Dendritic cell treated with granulocyte-macrophage colony-stimulating factor and Interleukin-4, amounts not matched to agents 40 ng/mL and 50 ng/mL, for 4 days (primary cell): ENCODE measurements at regions of chr19 and their contacts with region 1.

Region 1: GRCh38 chr19:1605236-1606137 is at the start of gene UQCR11:
- H3K4me3 Mint-ChIP-seq: peak within 1 kb of the TSS; percentile 97
- H3K27ac Mint-ChIP-seq: peak within 1 kb of the TSS; percentile 98
- H3K4me1 Mint-ChIP-seq: peaks cover 77% of the 10 kb centered on the region
- H3K27me3 Mint-ChIP-seq: peaks cover 12% of the 10 kb centered on the region

Region 2: GRCh38 chr19:1507763-1508509 is 97.6 kb before region 1 on chr19:
- intact Hi-C with region 1: no loop called
- H3K4me3 Mint-ChIP-seq: peak overlapping the region; percentile 80
- H3K27ac Mint-ChIP-seq: peak overlapping the region; percentile 85
- H3K4me1 Mint-ChIP-seq: peaks cover 24% of the 10 kb centered on the region
- H3K27me3 Mint-ChIP-seq: peaks cover 82% of the 10 kb centered on the region

Region 3: DNA sequence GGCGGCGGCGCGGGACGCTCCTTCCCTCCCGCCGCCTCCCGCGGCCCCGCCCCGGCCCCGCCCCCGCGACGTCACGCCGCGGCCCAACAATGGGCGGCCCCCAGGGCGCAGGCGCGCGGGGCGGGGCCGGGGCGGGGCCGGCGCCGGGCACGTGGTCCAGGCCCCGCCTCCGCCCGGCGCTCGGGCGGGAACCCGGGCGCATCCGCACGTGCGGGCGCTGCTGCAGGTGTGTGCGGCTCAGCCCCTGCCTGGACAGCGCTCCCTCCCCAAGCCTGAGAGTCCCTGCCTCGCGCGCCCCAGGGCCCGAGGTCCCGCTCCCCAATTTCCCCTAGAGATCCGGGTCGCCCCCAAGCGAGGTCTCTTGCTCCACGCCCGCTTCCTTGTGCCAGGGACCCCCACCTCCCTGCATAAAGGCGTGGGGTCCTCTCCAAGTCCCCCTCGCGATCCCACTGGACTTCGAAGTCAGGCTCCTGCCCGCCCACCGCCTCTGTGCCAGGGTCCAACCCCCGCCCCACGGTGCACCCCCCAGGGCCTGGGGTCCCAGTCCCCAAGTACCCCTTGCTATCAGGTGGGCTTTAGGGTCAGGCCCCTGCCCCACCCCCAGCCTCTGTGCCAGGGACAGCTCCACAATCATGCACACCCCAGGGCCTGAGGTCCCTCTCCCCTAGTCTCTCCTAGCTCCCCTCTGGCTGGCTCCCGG is 37.0 kb before region 1 on chr19 and contains the start of gene MEX3D:
- intact Hi-C with region 1: no loop called
- H3K4me3 Mint-ChIP-seq: peak within 1 kb of the TSS; percentile 65
- H3K27ac Mint-ChIP-seq: peak within 1 kb of the TSS; percentile 44
- H3K4me1 Mint-ChIP-seq: peaks cover 15% of the 10 kb centered on the region
- H3K27me3 Mint-ChIP-seq: peaks cover 53% of the 10 kb centered on the region

Region 4: DNA sequence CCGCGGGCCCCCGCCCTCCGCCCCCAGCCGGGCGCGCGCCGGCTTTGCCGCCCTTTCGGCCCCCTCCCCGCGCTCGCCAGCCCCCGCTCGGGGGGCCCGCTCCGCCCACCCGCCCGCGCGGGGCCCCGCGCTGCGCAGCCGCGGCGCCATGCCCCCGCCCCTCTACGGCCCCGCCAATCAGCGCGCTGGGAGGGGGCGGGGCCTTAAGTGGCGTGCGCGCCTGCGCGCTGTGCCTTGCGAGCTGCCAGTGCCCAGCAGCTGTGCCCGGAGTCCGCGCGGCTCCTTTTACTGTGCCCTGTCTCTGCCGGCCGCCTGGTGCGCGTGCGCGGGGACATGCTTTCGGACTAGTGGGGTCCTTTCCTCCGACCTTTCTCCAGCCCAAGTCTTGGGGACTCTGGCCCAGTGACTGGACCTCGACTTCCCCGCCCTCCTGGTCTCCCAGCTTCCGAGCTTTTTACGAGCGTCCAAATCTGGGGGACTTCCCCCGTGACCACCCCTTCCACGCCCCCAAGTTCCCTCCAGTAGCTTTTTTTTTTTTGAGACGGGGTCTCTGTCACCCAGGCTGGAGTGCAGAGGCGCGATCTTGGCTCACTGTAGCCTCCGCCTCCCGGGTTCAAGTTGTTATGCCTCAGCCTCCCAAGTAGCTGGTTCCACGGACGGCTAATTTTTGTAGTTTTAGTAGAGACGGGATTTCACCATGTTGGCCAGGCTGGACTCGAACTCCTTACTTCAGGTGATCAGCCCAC is 12.6 kb before region 1 on chr19 and contains the start of gene MBD3:
- intact Hi-C with region 1: loop called (anchors 1 kb)
- H3K4me3 Mint-ChIP-seq: peak within 1 kb of the TSS; percentile 91
- H3K27ac Mint-ChIP-seq: peak within 1 kb of the TSS; percentile 95
- H3K4me1 Mint-ChIP-seq: peaks cover 31% of the 10 kb centered on the region
- H3K27me3 Mint-ChIP-seq: no peaks in the 10 kb centered on the region

Region 5: GRCh38 chr19:1652471-1653299 is 47.2 kb after region 1 on chr19 and contains the start of gene TCF3:
- intact Hi-C with region 1: loop called (anchors 1 kb)
- H3K4me3 Mint-ChIP-seq: peak within 1 kb of the TSS; percentile 82
- H3K27ac Mint-ChIP-seq: peak within 1 kb of the TSS; percentile 97
- H3K4me1 Mint-ChIP-seq: peaks cover 52% of the 10 kb centered on the region
- H3K27me3 Mint-ChIP-seq: peaks cover 2% of the 10 kb centered on the region

Region 6: DNA sequence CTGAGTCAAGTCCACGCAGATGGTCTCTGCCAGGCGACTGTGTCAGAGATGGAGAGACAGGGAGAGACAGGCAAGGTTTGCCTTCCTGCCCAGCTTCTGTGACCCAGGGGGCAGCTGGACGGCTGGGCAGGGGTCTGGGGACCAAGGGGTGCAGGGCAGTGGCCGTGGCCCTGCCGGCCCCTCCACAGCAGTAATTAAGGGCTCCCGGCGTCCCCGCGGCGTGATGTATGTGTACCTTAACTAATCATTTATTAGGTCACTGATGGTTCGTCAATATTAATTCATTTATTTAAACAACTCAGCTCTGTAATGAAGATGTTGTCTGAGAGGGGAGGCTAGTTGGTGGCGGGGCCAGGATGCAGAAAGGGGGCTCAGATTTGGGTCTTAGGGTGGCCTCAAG is 75.5 kb after region 1 on chr19:
- intact Hi-C with region 1: no loop called
- H3K4me3 Mint-ChIP-seq: no peak overlapping the region
- H3K27ac Mint-ChIP-seq: no peak overlapping the region
- H3K4me1 Mint-ChIP-seq: no peaks in the 10 kb centered on the region
- H3K27me3 Mint-ChIP-seq: peaks cover 54% of the 10 kb centered on the region

Region 7: DNA sequence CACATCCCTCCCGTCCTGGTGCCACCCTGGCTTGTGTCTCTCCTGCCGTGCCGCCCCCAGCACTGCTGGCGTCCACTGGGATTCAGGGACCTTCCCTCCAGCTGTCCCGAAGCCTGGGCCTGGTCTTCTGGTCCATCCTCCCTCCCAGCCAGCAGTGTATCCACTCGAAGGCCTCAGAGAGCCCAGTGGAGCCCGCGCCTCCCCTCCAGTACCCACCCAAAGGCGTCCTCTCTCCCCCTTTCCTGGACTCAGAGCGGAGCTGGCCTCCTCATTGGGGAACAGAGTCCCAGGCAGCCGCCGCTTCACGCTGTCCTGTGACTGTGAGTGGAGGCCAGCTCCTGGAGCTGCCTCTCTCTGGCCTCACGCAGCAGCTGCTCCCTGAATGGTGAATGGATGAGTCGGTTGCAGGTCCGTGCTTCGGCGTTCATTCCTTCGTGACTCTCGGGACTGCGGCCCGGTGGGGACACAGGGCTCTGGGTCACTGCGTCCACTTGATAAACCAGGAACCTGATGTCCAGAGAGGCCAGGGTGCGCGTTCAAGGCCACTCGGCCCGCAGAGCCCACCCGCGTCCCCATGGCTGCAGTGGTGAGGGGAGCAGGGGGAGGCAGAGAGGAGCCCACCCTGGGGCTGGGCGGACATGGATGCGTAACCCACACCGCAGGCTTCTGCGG is 159.9 kb after region 1 on chr19:
- intact Hi-C with region 1: no loop called
- H3K4me3 Mint-ChIP-seq: no peak overlapping the region
- H3K27ac Mint-ChIP-seq: no peak overlapping the region
- H3K4me1 Mint-ChIP-seq: peaks cover 13% of the 10 kb centered on the region
- H3K27me3 Mint-ChIP-seq: peaks cover 100% of the 10 kb centered on the region